Colonic mucosa (tissue), 4 donors: ENCODE measurements at regions of chr15 and their contacts with region 1.

Region 1: DNA sequence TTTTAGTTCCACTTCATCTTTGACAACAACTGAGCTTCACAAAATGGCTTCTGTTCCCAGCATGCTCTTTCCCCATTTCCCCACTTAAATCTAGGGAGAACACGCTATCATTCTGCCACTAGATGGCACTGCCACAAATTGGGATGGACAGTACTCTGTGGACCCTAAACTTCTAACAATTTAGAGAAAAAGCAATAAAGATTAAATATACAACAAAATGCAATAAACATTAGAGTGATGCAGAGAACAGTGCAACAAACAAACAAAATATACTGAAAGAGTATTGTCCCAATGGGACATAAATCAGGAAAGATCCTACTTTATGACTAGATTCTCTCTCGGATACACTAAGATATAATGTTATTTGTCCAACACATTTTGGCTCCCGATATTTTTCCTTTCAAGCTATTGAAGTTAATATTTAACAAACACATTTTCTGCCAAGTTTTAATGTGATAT is 169.7 kb upstream of the TMCO5A start:
- DNase-seq: peak; percentile 38
- H3K4me3 ChIP-seq: no peak overlapping the region
- H3K27ac ChIP-seq: no peak overlapping the region
- H3K4me1 ChIP-seq: no peaks in the 10 kb centered on the region
- H3K27me3 ChIP-seq: no peaks in the 10 kb centered on the region
- CTCF ChIP-seq: peak; percentile 41

Region 2: GRCh38 chr15:37880009-37880834 is 115.5 kb after region 1 on chr15:
- intact Hi-C with region 1: loop called (anchors 10 kb)
- DNase-seq: no peak
- H3K4me3 ChIP-seq: no peak overlapping the region
- H3K27ac ChIP-seq: no peak overlapping the region
- H3K4me1 ChIP-seq: no peaks in the 10 kb centered on the region
- H3K27me3 ChIP-seq: no peaks in the 10 kb centered on the region
- CTCF ChIP-seq: peak; percentile 54

Region 3: GRCh38 chr15:38054488-38054887 is 289.7 kb after region 1 on chr15:
- intact Hi-C with region 1: no loop called
- DNase-seq: no peak
- H3K4me3 ChIP-seq: no peak overlapping the region
- H3K27ac ChIP-seq: no peak overlapping the region
- H3K4me1 ChIP-seq: no peaks in the 10 kb centered on the region
- H3K27me3 ChIP-seq: no peaks in the 10 kb centered on the region
- CTCF ChIP-seq: no peak